AG04450 (cell line): ENCODE measurements at regions of chr12 and their contacts with region 1.

Region 1: GRCh38 chr12:123043536-123044001 is 63.1 kb downstream of the ARL6IP4 start:
- DNase-seq: peak; percentile 96
- H3K4me3 ChIP-seq: no peak overlapping the region
- H3K27ac ChIP-seq: peak overlapping the region; percentile 85
- H3K27me3 ChIP-seq: no peaks in the 10 kb centered on the region
- CTCF ChIP-seq: peak; percentile 85

Region 2: DNA sequence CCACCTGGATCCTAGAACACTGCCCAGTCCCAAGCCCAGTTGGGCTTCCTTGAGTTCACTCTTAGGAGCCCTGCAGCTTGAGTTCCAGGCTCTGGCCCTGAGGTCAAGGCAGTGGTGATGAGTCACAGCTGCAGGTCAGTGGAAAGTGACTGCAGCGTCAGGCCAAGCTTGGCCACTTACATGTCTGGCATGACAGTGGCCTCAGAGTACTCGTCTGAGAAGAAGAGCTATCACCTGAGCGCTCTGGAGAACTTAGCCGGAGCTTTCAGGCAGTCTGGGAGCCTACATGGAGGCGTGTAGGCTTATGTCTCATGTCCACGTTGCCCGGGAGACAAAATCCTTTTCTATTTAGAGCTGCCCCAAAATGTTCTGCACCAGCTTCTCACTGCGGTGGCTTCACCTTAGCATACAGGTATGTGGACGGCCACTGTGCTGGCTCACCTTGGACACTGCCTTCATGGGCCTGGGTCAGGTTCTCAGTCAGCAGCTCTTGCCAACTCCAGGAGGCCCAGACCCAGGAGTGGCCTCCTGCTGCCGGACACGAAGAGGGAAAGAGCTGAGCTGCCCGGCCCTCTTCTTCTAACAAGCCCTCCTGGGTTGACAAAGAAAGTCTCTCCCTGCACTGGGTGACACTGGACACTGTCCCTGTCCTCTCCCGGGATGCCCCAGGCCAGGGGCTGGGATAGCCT is 12.6 kb after region 1 on chr12:
- CTCF ChIA-PET with region 1: interaction called, 22 read pairs
- POLR2A ChIA-PET with region 1: interaction called, 3 read pairs
- DNase-seq: no peak
- H3K4me3 ChIP-seq: no peak overlapping the region
- H3K27ac ChIP-seq: no peak overlapping the region
- H3K27me3 ChIP-seq: no peaks in the 10 kb centered on the region
- CTCF ChIP-seq: no peak

Region 3: GRCh38 chr12:123062681-123063486 is 19.3 kb after region 1 on chr12:
- CTCF ChIA-PET with region 1: interaction called, 22 read pairs
- POLR2A ChIA-PET with region 1: interaction called, 4 read pairs
- DNase-seq: no peak
- H3K4me3 ChIP-seq: no peak overlapping the region
- H3K27ac ChIP-seq: no peak overlapping the region
- H3K27me3 ChIP-seq: no peaks in the 10 kb centered on the region
- CTCF ChIP-seq: no peak

Region 4: DNA sequence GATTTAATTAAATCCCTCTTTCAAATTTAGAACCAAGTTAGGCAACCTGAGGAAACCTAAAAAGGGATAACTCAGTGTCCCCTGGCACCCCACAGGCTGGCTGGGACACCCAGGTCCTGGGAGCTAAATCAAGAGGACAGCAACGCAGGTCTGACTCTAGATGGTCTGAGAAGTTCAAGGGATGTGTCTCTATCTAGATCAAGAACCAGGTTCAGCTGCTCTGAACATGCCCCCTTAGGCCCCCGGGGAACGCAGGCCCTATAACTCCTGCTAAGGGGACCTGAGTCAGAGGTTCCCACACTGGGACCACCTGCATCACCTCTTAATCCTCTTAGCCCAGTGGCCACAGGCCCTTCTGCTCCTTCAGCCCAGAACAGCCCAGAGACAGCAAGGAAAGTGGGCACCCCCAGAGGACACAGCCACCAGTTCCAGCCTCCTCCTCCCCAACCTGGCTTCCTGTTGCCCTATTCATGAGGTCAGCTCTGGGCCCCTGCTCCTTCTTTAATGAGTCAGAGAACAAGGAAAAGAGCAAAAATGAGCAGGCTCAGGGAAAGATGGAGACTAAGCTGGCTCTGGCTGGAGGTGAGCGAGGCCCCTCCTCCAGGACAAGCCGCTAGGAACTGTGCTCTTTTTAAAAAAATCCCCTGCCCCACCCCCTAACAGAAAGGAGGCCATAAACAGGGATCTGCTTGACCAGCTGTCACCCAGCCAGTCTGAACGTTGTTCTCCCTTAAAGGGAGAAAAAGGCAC is 96.5 kb after region 1 on chr12:
- CTCF ChIA-PET with region 1: interaction called, 11 read pairs
- POLR2A ChIA-PET with region 1: interaction called, 3 read pairs
- DNase-seq: no peak
- H3K4me3 ChIP-seq: no peak overlapping the region
- H3K27ac ChIP-seq: no peak overlapping the region
- H3K27me3 ChIP-seq: no peaks in the 10 kb centered on the region
- CTCF ChIP-seq: no peak

Region 5: DNA sequence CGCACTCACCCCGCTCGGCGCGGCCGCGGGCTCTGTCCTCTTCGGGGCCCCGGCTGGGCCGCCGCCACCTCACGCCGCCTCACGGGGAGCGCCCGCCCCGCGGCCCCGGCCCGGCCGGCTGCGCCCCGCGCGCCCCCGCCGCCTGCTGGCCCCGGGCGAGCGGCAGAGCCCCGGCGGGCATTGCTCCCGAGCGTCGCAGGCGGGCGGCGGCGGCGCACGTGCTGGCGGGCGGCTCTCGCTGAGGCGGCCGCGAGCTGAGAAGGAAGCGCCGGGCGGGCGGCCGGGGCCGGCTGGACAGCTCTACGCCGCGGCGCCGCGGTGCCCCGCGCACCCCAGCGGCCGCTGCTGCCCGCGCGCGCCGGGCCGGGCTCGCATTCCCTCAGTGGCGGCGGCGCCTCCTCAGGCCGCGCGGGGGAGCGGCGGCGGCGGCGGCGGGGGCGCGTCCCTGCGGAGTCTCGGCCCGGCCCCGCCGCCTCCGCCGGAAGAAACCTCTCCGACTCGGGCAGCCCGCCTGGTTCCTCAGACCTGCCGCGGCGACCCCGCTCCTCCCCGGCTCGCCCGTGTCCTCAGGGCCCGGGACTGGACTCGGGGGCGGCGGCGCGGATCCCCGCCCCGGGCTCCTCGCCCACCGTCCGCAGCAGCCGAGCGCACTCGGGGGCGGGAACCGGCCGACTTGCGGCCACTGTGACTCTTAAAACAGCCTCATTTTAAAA is 107.3 kb after region 1 on chr12 and contains the start of gene PITPNM2:
- CTCF ChIA-PET with region 1: interaction called, 31 read pairs
- POLR2A ChIA-PET with region 1: interaction called, 4 read pairs
- DNase-seq: no peak
- H3K4me3 ChIP-seq: peak within 1 kb of the TSS; percentile 66
- H3K27ac ChIP-seq: no peak within 1 kb of the TSS
- H3K27me3 ChIP-seq: no peaks in the 10 kb centered on the region
- CTCF ChIP-seq: no peak
- polyA plus RNA-seq, gene PITPNM2: 1.3 and 2.2 TPM in 2 replicates